ENCODE measurements at regions of chr19 and their contacts with region 1.

Region 1: GRCh38 chr19:2315818-2316353 is 7.9 kb upstream of the LINGO3 start:
- DNase-seq: no peak
- ATAC-seq: peak; percentile 58
- H3K4me3 Mint-ChIP-seq: no peak overlapping the region
- H3K27ac Mint-ChIP-seq: no peak overlapping the region
- H3K4me1 Mint-ChIP-seq: no peaks in the 10 kb centered on the region
- H3K27me3 Mint-ChIP-seq: peaks cover 12% of the 10 kb centered on the region
- CTCF ChIP-seq: peak; percentile 37

Region 2: GRCh38 chr19:2236314-2237050 is 79.4 kb before region 1 on chr19 and contains the starts of genes PLEKHJ1 and SF3A2:
- CTCF ChIA-PET with region 1: no interaction called
- POLR2A ChIA-PET with region 1: no interaction called
- intact Hi-C with region 1: no loop called
- DNase-seq: peak; percentile 98
- ATAC-seq: peak; percentile 88
- H3K4me3 Mint-ChIP-seq: peak within 1 kb of the TSS; percentile 92
- H3K27ac Mint-ChIP-seq: peak within 1 kb of the TSS; percentile 99
- H3K4me1 Mint-ChIP-seq: peaks cover 54% of the 10 kb centered on the region
- H3K27me3 Mint-ChIP-seq: no peaks in the 10 kb centered on the region
- CTCF ChIP-seq: peak; percentile 98
- total RNA-seq, gene PLEKHJ1: 65.3 to 72.8 TPM
- total RNA-seq, gene SF3A2: 157 to 163 TPM

Region 3: GRCh38 chr19:2328401-2329148 is 12.7 kb after region 1 on chr19 and contains the starts of genes LSM7 and SPPL2B:
- CTCF ChIA-PET with region 1: interaction called, 4 read pairs
- POLR2A ChIA-PET with region 1: interaction called, 32 read pairs
- intact Hi-C with region 1: no loop called
- DNase-seq: peak; percentile 91
- ATAC-seq: peak; percentile 74
- H3K4me3 Mint-ChIP-seq: peak within 1 kb of the TSS; percentile 95
- H3K27ac Mint-ChIP-seq: peak within 1 kb of the TSS; percentile 98
- H3K4me1 Mint-ChIP-seq: peaks cover 67% of the 10 kb centered on the region
- H3K27me3 Mint-ChIP-seq: no peaks in the 10 kb centered on the region
- CTCF ChIP-seq: no peak
- total RNA-seq, gene LSM7: 154 to 162 TPM
- total RNA-seq, gene SPPL2B: 52.8 to 54.3 TPM

Measured in activated CD8-positive, alpha-beta T cell treated with anti-CD3 and anti-CD28 coated beads for 36 hours (primary cell).